ENCODE measurements at regions of chr7 and their contacts with region 1.

Region 1: GRCh38 chr7:34430458-34430857 is 227.6 kb upstream of the NPSR1 start:
- DNase-seq: peak; percentile 83
- H3K4me3 Mint-ChIP-seq: no peak overlapping the region
- H3K27ac Mint-ChIP-seq: no peak overlapping the region
- H3K4me1 Mint-ChIP-seq: peaks cover 14% of the 10 kb centered on the region
- H3K27me3 Mint-ChIP-seq: peaks cover 9% of the 10 kb centered on the region
- CTCF ChIP-seq: peak; percentile 78

Region 2: DNA sequence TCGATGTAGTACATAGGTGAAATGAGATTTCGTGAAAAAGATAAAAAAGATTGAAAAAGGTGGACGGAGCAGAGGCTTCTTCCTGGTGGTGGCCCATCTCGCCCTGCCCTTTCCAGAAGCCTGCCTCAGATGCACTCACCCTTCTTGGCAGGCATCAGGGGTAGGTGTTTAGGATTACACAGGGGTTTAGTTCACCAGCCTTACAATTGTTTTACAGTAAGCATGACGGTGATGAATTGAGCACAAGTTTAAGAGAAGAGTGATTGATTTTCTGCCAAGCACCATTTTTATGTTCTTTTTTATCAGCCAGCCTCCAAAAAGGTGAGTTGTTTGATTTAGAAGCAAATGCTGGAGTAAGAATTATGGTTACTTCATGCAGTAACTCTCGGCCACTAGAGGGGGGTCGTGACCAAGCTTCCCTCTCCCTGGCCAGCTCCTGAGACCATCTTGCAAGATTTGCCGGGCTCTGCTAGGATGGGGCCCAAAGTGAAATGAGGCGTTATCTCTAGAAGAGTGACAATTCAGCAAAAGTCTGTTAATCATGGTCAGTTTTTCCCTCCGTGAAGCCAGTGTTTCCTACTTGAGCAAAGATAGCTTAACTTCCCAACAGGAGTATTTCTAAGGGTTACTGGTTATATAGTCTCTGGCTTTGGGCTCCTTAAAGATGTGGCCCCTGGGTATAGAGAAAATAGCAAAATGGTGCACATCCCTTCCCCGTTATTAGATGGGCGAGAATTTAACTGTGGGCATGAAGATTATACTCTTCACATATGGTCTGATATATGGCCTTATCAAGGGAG is 296.3 kb before region 1 on chr7:
- CTCF ChIA-PET with region 1: no interaction called
- intact Hi-C with region 1: loop called (anchors 2 kb)
- DNase-seq: peak; percentile 85
- H3K4me3 Mint-ChIP-seq: no peak overlapping the region
- H3K27ac Mint-ChIP-seq: no peak overlapping the region
- H3K4me1 Mint-ChIP-seq: no peaks in the 10 kb centered on the region
- H3K27me3 Mint-ChIP-seq: peaks cover 75% of the 10 kb centered on the region
- CTCF ChIP-seq: peak; percentile 88

Region 3: DNA sequence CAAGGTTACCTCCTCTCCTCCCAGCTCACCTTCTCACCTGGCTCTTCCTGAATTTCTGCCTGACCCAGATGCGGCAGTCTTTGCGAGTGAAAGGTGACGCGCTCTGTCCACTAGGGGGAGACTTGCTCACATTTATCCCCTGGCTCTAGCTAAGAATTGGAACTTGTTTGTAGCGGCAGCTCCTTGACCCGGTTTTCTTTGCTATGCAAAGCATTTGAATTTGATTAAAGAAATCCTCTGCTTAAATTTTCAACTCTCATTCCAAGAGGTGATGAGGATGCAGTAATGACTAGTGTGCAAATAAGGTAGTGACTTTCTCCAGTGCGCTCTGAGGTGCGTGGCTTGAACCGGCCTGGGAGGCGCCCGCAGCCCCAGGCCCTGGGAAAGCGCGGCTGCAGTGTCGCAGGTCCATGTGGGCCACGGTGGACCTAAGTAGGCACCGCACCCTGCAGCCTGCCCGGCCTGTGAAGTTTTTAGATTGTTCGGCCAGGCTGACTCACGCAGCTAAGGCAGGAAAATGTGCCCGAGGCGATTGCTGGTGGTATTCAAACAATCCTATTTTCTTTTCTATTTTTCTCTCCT is 109.4 kb before region 1 on chr7:
- CTCF ChIA-PET with region 1: interaction called, 15 read pairs
- intact Hi-C with region 1: loop called (anchors 1 kb)
- DNase-seq: peak; percentile 83
- H3K4me3 Mint-ChIP-seq: peak overlapping the region; percentile 56
- H3K27ac Mint-ChIP-seq: peak overlapping the region; percentile 40
- H3K4me1 Mint-ChIP-seq: peaks cover 15% of the 10 kb centered on the region
- H3K27me3 Mint-ChIP-seq: no peaks in the 10 kb centered on the region
- CTCF ChIP-seq: peak; percentile 97

Region 4: DNA sequence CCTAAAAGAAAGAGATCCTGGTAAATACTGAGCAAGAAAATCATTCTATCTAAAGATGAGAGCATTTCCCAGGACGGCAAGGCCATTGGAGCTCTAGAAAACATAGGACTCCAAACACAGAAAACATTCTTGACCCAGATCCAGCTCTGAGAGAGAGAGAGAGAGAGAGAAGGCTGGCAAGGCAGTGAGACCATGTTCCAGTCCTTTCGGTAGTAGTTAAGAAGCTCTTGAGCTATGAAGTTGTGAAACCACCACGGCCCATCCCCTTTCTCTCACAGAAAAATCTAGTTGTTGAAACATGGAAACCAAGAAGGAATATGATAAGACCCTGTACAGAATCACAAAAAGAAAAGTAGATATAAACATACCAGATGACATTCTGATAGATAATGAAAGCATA is 15.2 kb after region 1 on chr7:
- CTCF ChIA-PET with region 1: no interaction called
- intact Hi-C with region 1: no loop called
- DNase-seq: no peak
- H3K4me3 Mint-ChIP-seq: no peak overlapping the region
- H3K27ac Mint-ChIP-seq: no peak overlapping the region
- H3K4me1 Mint-ChIP-seq: no peaks in the 10 kb centered on the region
- H3K27me3 Mint-ChIP-seq: no peaks in the 10 kb centered on the region
- CTCF ChIP-seq: no peak

Region 5: DNA sequence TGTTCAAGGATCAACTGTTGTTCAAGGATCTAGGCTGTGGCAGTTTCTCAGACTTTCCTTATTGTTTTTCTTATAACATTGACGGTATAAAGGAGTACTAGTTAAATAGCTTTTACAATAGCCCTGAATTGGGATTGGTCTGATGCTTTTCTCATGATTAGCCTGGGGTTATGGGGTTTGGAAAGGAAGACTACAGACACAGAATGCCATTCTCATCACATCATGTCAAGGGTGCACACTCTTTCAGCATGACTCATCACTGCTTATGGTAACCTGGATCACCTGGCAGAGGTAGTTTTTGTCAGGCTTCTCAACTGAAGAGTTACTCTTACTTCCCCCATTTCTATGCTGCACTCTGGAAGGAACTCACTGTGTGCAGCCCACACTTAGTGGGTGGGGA is 33.4 kb after region 1 on chr7:
- CTCF ChIA-PET with region 1: no interaction called
- intact Hi-C with region 1: no loop called
- DNase-seq: peak; percentile 30
- H3K4me3 Mint-ChIP-seq: no peak overlapping the region
- H3K27ac Mint-ChIP-seq: no peak overlapping the region
- H3K4me1 Mint-ChIP-seq: peaks cover 11% of the 10 kb centered on the region
- H3K27me3 Mint-ChIP-seq: peaks cover 2% of the 10 kb centered on the region
- CTCF ChIP-seq: no peak

Region 6: GRCh38 chr7:34596892-34597291 is 166.4 kb after region 1 on chr7:
- CTCF ChIA-PET with region 1: no interaction called
- intact Hi-C with region 1: loop called (anchors 2 kb)
- DNase-seq: peak; percentile 40
- H3K4me3 Mint-ChIP-seq: no peak overlapping the region
- H3K27ac Mint-ChIP-seq: no peak overlapping the region
- H3K4me1 Mint-ChIP-seq: no peaks in the 10 kb centered on the region
- H3K27me3 Mint-ChIP-seq: no peaks in the 10 kb centered on the region
- CTCF ChIP-seq: peak; percentile 65